Left lung (tissue), 14 donors: ENCODE measurements at regions of chr13 and their contacts with region 1.

Region 1: GRCh38 chr13:44044547-44045179 is 165.0 kb downstream of the LACC1 start:
- DNase-seq: no peak
- ATAC-seq: no peak
- H3K4me3 ChIP-seq: no peak overlapping the region
- H3K27ac ChIP-seq: no peak overlapping the region
- H3K4me1 ChIP-seq: no peaks in the 10 kb centered on the region
- H3K27me3 ChIP-seq: no peaks in the 10 kb centered on the region
- CTCF ChIP-seq: no peak

Region 2: DNA sequence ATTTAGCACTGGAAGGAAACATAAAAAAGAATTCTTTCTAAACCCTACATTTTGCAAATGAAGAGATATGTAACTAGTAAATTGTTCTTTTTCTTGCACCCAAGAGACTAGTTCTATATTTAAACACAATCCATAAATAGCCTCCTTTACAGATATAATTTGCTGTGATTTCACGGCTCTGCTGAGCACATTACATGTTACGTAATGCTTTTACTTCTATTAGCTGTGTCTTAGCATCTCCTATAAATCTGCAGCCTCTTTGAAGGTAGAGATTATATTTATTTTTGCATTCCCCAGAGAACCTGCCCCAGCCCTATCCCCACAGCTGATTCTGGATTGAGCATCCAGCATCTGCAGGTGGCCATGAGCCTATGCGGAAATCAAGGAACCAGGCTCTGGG is 132.8 kb before region 1 on chr13:
- intact Hi-C with region 1: loop called in 1 of 2 experiments (anchors 5 kb)
- DNase-seq: no peak
- ATAC-seq: no peak
- H3K4me3 ChIP-seq: no peak overlapping the region
- H3K27ac ChIP-seq: no peak overlapping the region
- H3K4me1 ChIP-seq: peaks cover 0 to 8% of the 10 kb centered on the region in 2 donors
- H3K27me3 ChIP-seq: peaks cover 0 to under 1% of the 10 kb centered on the region in 2 donors
- CTCF ChIP-seq: no peak